ENCODE measurements at regions of chr1 and their contacts with region 1.

Region 1: GRCh38 chr1:164608651-164609057 is 49.7 kb downstream of the PBX1 start:
- DNase-seq: no peak
- H3K4me3 ChIP-seq: no peak overlapping the region
- H3K27me3 ChIP-seq: no peaks in the 10 kb centered on the region
- CTCF ChIP-seq: no peak

Region 2: DNA sequence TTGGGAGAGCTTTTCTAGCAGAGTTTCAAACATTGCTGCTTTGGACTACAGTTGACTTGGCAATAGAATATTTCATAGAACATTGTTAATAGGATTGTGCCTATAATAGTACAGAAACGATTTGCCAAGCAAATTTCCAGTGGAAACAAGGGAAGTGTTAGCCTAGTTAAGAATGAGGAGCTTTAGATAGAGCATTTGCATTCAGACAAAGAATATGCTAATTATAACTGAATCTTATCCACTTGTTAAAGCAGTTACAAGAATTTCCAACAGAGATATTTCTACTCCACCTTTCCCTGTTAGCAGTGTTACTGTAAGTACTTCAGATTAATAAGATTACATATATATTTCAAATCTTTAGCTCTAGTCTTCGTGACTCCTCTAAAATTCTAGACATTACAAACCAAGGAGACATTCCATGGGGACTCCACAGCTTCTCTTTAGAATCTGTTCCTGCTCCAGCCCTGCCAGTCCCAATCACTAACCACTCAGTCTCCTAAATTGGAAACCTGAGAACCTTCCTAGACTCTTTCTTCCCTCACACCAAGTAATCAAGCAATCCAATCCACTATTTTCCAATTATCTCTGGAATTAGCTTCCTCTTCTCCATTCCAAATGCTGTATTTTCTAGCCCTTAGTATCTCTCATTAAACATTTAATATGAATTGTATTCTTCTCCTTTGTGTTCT is 191.5 kb before region 1 on chr1:
- CTCF ChIA-PET with region 1: no interaction called
- POLR2A ChIA-PET with region 1: interaction called, 13 read pairs
- DNase-seq: no peak
- H3K4me3 ChIP-seq: no peak overlapping the region
- H3K27me3 ChIP-seq: no peaks in the 10 kb centered on the region
- CTCF ChIP-seq: no peak

Region 3: DNA sequence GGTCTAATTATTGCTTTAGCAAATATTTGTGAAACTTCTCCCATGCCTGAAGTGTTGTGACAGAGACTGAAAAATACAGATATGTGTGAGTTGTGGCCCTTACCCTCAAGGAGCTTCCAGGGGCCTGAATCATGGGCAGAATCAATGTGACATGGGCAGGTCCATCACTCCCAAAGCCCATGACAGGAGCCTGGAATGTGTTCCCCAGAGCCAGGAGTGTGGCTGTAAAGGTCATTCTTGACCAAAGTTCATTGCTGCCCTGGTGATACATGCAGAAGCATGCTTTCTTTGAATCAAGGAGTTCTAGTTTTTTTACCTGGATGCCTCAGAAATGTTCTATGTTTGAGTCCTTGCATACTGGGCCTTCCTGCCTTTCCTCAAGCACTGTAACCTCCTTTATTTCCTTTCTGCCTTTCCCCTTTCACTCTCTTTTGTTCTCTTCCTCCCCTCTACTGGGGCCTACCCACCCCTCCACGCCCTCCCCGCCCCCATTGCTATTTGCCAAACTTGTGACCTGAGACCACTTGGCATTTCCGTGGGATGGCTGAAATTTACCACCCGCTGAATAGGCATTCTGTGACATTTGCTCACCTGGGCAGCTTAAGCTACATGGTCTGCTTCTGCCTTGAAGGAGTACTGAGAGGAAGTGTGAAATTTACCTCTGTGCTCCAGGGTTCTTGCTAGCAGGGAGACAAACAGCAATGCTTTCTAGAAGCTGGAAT is 30.0 kb before region 1 on chr1:
- CTCF ChIA-PET with region 1: no interaction called
- POLR2A ChIA-PET with region 1: no interaction called
- DNase-seq: no peak
- H3K4me3 ChIP-seq: no peak overlapping the region
- H3K27me3 ChIP-seq: no peaks in the 10 kb centered on the region
- CTCF ChIP-seq: no peak

Region 4: GRCh38 chr1:164596215-164596614 is 12.4 kb before region 1 on chr1:
- CTCF ChIA-PET with region 1: no interaction called
- POLR2A ChIA-PET with region 1: no interaction called
- DNase-seq: no peak
- H3K4me3 ChIP-seq: no peak overlapping the region
- H3K27me3 ChIP-seq: no peaks in the 10 kb centered on the region
- CTCF ChIP-seq: no peak

Measured in BJ (cell line).